Ovary (tissue), 10 donors: ENCODE measurements at regions of chr12 and their contacts with region 1.

Region 1: DNA sequence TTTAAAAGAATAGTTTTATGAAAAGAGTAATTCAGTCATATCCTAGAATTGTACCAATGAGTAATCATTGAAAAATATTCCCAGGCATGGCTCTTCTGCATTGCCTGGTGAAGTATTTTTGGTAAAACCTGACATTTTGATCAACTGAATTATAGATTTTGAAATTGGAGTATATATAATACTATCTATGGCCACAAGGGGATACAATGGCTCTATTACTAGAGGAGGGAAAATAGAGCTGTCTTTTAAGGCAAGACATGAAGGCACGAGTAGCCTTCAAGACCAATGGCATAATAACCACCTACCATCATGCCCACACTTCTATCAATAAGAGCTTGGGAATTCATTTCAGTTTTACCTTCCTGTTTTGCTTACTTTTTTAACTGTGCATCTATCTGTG is 1241.4 kb upstream of the TMEM132C start:
- DNase-seq: no peak
- H3K4me3 ChIP-seq: no peak overlapping the region
- H3K27ac ChIP-seq: no peak overlapping the region
- H3K4me1 ChIP-seq: no peaks in the 10 kb centered on the region
- H3K27me3 ChIP-seq: no peaks in the 10 kb centered on the region
- CTCF ChIP-seq: no peak
- EP300 ChIP-seq: no peak
- POLR2A ChIP-seq: no peak

Region 2: GRCh38 chr12:127054571-127054970 is 29.0 kb after region 1 on chr12:
- intact Hi-C with region 1: loop called in 1 of 4 experiments (anchors 2 kb)
- DNase-seq: no peak
- H3K4me3 ChIP-seq: no peak overlapping the region
- H3K27ac ChIP-seq: no peak overlapping the region
- H3K4me1 ChIP-seq: peaks cover 3% of the 10 kb centered on the region
- H3K27me3 ChIP-seq: no peaks in the 10 kb centered on the region
- CTCF ChIP-seq: no peak
- EP300 ChIP-seq: no peak
- POLR2A ChIP-seq: no peak

Region 3: GRCh38 chr12:127401005-127401404 is 375.5 kb after region 1 on chr12:
- intact Hi-C with region 1: no loop called
- DNase-seq: no peak
- H3K4me3 ChIP-seq: no peak overlapping the region
- H3K27ac ChIP-seq: no peak overlapping the region
- H3K4me1 ChIP-seq: no peaks in the 10 kb centered on the region
- H3K27me3 ChIP-seq: no peaks in the 10 kb centered on the region
- CTCF ChIP-seq: no peak
- EP300 ChIP-seq: no peak
- POLR2A ChIP-seq: no peak